ENCODE measurements at regions of chr6 and their contacts with region 1.

Region 1: GRCh38 chr6:35311390-35312075 is 13.9 kb downstream of the DEF6 start:
- DNase-seq: peak; percentile 69
- ATAC-seq: peak; percentile 74
- H3K4me3 Mint-ChIP-seq: peak overlapping the region; percentile 60
- H3K27ac Mint-ChIP-seq: peak overlapping the region; percentile 96
- H3K4me1 Mint-ChIP-seq: peaks cover 89% of the 10 kb centered on the region
- H3K27me3 Mint-ChIP-seq: no peaks in the 10 kb centered on the region

Region 2: GRCh38 chr6:35076997-35077712 is 234.4 kb before region 1 on chr6:
- CTCF ChIA-PET with region 1: no interaction called
- POLR2A ChIA-PET with region 1: no interaction called
- intact Hi-C with region 1: no loop called
- DNase-seq: no peak
- ATAC-seq: no peak
- H3K4me3 Mint-ChIP-seq: no peak overlapping the region
- H3K27ac Mint-ChIP-seq: no peak overlapping the region
- H3K4me1 Mint-ChIP-seq: no peaks in the 10 kb centered on the region
- H3K27me3 Mint-ChIP-seq: no peaks in the 10 kb centered on the region

Region 3: GRCh38 chr6:35327349-35328027 is 16.0 kb after region 1 on chr6:
- CTCF ChIA-PET with region 1: interaction called, 22 read pairs
- POLR2A ChIA-PET with region 1: no interaction called
- intact Hi-C with region 1: no loop called
- DNase-seq: peak; percentile 89
- ATAC-seq: peak; percentile 96
- H3K4me3 Mint-ChIP-seq: no peak overlapping the region
- H3K27ac Mint-ChIP-seq: peak overlapping the region; percentile 73
- H3K4me1 Mint-ChIP-seq: peaks cover 19% of the 10 kb centered on the region
- H3K27me3 Mint-ChIP-seq: no peaks in the 10 kb centered on the region

Region 4: GRCh38 chr6:35419417-35419816 is 107.9 kb after region 1 on chr6:
- CTCF ChIA-PET with region 1: no interaction called
- POLR2A ChIA-PET with region 1: no interaction called
- intact Hi-C with region 1: no loop called
- DNase-seq: no peak
- ATAC-seq: peak; percentile 42
- H3K4me3 Mint-ChIP-seq: no peak overlapping the region
- H3K27ac Mint-ChIP-seq: peak overlapping the region; percentile 34
- H3K4me1 Mint-ChIP-seq: peaks cover 28% of the 10 kb centered on the region
- H3K27me3 Mint-ChIP-seq: no peaks in the 10 kb centered on the region

Measured in activated CD4-positive, alpha-beta T cell treated with anti-CD3 and anti-CD28 coated beads for 36 hours (primary cell).